GM12878 (cell line): ENCODE measurements at regions of chr1 and their contacts with region 1.

Region 1: GRCh38 chr1:62841587-62842169 is 57.7 kb downstream of the ATG4C start:
- DNase-seq: peak; percentile 15
- ATAC-seq: peak; percentile 85
- H3K4me3 ChIP-seq: no peak overlapping the region
- H3K27ac ChIP-seq: no peak overlapping the region
- H3K4me1 ChIP-seq: no peaks in the 10 kb centered on the region
- H3K27me3 ChIP-seq: no peaks in the 10 kb centered on the region
- CTCF ChIP-seq: peak; percentile 36 to 62 (median 55); a peak in 5 of 6 replicates
- EP300 ChIP-seq: no peak
- POLR2A ChIP-seq: no peak
- RAD21 ChIP-seq: peak; percentile 70

Region 2: DNA sequence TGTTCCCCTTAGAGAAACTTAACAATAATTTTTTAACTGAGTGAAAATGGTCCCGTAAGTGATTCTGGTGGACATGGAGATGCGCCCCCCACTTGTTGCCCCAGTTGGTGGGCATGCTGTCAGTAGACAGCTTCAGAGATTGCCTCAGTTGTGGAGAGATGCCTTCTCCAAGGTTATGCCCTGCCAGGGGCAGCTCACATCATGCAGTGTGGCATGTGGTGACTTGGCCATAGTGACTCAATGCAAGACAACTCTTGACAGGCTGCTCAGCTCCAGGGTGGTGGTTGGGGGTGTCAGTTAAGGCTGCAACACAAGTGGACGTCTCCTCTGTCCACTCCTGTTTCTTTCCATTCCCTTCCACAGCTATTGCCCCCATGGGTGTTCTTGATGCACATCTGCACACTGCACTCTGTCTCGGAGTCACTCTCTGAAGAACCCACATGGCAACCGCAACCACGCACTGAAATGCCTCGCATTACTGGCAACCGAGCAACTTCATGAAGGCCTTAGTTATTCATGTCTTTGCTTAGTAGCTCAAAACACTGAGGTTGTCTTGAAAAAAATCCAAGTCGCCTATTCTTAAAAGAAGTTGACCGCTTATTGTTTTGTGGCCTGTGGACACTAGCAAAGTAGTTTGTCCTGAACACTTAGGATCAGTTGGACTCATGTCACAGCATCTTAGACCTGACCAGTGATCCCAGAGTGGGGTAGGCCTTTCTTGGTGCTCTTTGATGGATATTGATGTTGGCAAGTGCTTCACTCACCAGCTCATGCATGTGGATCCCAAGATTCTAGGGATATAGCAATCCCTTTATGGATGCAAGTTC is 459.6 kb before region 1 on chr1:
- CTCF ChIA-PET with region 1: no interaction called
- POLR2A ChIA-PET with region 1: no interaction called
- RAD21 ChIA-PET with region 1: no interaction called
- SMC1A ChIA-PET with region 1: no interaction called
- in situ Hi-C with region 1: no loop called
- intact Hi-C with region 1: no loop called
- DNase-seq: no peak
- ATAC-seq: no peak
- H3K4me3 ChIP-seq: no peak overlapping the region
- H3K27ac ChIP-seq: no peak overlapping the region
- H3K4me1 ChIP-seq: no peaks in the 10 kb centered on the region
- H3K27me3 ChIP-seq: no peaks in the 10 kb centered on the region; a peak in 1 of 4 replicates
- CTCF ChIP-seq: no peak
- EP300 ChIP-seq: no peak
- POLR2A ChIP-seq: no peak
- RAD21 ChIP-seq: no peak

Region 3: DNA sequence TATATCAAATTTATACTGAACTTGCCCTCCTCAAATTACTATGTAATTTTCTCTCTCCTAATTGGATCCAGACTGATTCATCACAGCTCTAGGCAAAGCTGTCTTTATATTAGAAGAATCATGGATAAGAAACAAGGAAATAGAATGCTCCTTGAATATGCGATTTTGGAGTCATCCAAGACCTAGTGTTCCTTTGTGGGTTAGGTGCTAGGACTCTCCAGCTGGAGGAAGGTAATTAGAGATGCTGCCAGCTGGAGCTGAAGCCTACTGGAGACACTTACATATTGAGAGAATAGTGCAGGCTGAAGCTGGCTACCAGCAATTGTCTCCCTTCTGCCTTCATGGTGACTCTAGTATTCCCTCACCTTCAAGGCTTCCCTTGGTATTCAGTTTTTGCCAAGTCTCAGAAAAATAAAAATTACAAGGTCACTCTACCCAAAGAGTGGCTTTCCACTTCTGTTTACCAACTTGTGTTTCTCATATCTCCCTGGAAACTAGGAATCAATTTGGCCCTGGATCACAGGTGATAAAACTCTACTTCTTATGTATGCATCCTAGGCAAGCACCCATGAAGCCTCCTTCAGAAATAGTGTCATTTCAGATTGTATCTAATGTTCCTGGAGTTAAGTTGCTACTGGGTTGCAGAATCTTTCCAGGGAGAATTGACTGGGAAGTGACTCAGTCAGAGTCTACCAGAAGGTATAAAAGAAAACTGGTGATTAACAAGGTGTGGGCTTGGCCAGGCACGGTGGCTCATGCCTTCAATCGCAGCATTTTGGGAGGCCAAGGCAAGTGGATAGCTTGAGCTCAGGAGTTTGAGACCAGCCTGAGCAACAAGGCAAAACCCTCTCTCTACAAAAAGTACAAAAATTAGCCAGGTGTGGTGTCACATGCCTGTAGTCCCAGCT is 129.1 kb before region 1 on chr1:
- CTCF ChIA-PET with region 1: no interaction called
- POLR2A ChIA-PET with region 1: no interaction called
- RAD21 ChIA-PET with region 1: no interaction called
- SMC1A ChIA-PET with region 1: no interaction called
- in situ Hi-C with region 1: no loop called
- intact Hi-C with region 1: no loop called
- DNase-seq: no peak
- ATAC-seq: no peak
- H3K4me3 ChIP-seq: no peak overlapping the region
- H3K27ac ChIP-seq: no peak overlapping the region
- H3K4me1 ChIP-seq: no peaks in the 10 kb centered on the region
- H3K27me3 ChIP-seq: no peaks in the 10 kb centered on the region
- CTCF ChIP-seq: no peak
- EP300 ChIP-seq: no peak
- POLR2A ChIP-seq: no peak
- RAD21 ChIP-seq: no peak

Region 4: DNA sequence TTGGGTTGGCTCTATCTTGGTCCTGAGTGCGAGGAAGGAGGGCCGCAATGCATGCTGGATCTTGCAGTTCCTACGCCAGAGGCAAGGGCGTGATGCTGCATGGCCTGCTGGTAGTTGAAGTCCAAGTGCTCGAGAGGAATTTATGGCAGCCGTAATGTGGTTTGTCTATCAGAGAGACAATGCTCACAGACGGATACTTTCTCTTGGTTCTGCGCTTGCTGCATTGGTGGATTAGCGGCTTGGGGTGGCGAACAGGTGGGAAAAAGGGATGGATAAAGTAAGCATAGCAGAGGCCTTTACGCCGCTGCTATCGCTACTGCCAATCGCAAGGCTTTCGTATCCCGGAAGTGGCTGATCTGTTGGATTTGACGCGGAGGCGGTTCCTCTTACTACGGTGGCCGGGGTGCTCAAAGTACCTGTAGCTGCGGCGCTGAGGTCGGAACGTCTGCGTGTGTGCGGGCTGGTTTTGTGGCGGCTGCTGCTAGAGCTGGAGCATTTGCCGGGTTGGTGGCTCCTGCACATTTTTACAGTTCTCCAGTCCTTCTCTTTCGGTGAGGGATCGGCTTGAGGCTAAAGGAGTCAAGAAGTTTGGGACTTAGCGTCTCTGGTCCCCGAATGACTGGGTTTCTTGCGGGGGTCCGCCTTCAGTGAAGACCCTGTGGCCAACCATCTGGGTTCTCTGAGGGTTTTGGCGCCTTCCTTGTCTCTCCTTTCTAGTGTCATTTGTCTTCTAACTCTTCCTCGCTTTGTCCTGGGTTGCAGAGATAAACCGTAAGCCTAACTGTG is 57.8 kb before region 1 on chr1 and contains the start of gene ATG4C:
- CTCF ChIA-PET with region 1: interaction called, 13 read pairs
- POLR2A ChIA-PET with region 1: no interaction called
- RAD21 ChIA-PET with region 1: interaction called, 8 read pairs
- SMC1A ChIA-PET with region 1: interaction called, 6 read pairs
- in situ Hi-C with region 1: no loop called
- intact Hi-C with region 1: loop called (anchors 2 kb)
- DNase-seq: peak; percentile 96
- ATAC-seq: peak; percentile 94
- H3K4me3 ChIP-seq: peak within 1 kb of the TSS; percentile 100
- H3K27ac ChIP-seq: peak within 1 kb of the TSS; percentile 94
- H3K4me1 ChIP-seq: no peaks in the 10 kb centered on the region
- H3K27me3 ChIP-seq: no peaks in the 10 kb centered on the region
- CTCF ChIP-seq: no peak
- EP300 ChIP-seq: 0 out of 4 replicates have a peak, but pooled peaks of 1 of the 2 experiments have one; percentile 29
- POLR2A ChIP-seq: peak; percentile 92
- RAD21 ChIP-seq: no peak
- polyA plus RNA-seq, gene ATG4C: 21.3 to 30.9 TPM

Region 5: DNA sequence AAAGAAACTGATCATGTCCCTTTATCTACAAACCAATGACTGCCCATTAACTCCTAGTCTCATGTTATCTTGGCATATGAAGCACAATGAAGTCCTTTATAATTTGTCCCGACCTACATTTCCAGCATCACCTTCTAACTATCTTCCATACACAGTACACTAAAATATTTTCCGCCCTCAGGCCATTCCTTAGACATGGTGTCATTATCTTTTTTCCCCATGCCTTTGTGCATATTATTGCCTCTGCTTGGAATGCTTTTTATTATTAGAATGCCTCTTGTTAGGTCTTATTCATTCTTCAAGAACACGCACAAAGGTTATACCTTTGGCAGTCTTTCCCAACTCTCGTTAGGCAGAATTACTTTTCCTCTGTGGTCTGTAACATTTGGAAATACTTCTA is 18.1 kb before region 1 on chr1:
- CTCF ChIA-PET with region 1: interaction called, 45 read pairs
- POLR2A ChIA-PET with region 1: no interaction called
- RAD21 ChIA-PET with region 1: no interaction called
- SMC1A ChIA-PET with region 1: interaction called, 6 read pairs
- in situ Hi-C with region 1: no loop called
- intact Hi-C with region 1: no loop called
- DNase-seq: no peak
- ATAC-seq: no peak
- H3K4me3 ChIP-seq: no peak overlapping the region
- H3K27ac ChIP-seq: no peak overlapping the region
- H3K4me1 ChIP-seq: no peaks in the 10 kb centered on the region
- H3K27me3 ChIP-seq: no peaks in the 10 kb centered on the region
- CTCF ChIP-seq: no peak
- EP300 ChIP-seq: no peak
- POLR2A ChIP-seq: no peak
- RAD21 ChIP-seq: no peak

Region 6: GRCh38 chr1:62882201-62883104 is 40.8 kb after region 1 on chr1:
- CTCF ChIA-PET with region 1: interaction called, 19 read pairs
- POLR2A ChIA-PET with region 1: no interaction called
- RAD21 ChIA-PET with region 1: no interaction called
- SMC1A ChIA-PET with region 1: no interaction called
- in situ Hi-C with region 1: no loop called
- intact Hi-C with region 1: no loop called
- DNase-seq: no peak
- ATAC-seq: no peak
- H3K4me3 ChIP-seq: no peak overlapping the region
- H3K27ac ChIP-seq: no peak overlapping the region
- H3K4me1 ChIP-seq: no peaks in the 10 kb centered on the region
- H3K27me3 ChIP-seq: no peaks in the 10 kb centered on the region
- CTCF ChIP-seq: no peak
- EP300 ChIP-seq: no peak
- POLR2A ChIP-seq: no peak
- RAD21 ChIP-seq: no peak

Region 7: DNA sequence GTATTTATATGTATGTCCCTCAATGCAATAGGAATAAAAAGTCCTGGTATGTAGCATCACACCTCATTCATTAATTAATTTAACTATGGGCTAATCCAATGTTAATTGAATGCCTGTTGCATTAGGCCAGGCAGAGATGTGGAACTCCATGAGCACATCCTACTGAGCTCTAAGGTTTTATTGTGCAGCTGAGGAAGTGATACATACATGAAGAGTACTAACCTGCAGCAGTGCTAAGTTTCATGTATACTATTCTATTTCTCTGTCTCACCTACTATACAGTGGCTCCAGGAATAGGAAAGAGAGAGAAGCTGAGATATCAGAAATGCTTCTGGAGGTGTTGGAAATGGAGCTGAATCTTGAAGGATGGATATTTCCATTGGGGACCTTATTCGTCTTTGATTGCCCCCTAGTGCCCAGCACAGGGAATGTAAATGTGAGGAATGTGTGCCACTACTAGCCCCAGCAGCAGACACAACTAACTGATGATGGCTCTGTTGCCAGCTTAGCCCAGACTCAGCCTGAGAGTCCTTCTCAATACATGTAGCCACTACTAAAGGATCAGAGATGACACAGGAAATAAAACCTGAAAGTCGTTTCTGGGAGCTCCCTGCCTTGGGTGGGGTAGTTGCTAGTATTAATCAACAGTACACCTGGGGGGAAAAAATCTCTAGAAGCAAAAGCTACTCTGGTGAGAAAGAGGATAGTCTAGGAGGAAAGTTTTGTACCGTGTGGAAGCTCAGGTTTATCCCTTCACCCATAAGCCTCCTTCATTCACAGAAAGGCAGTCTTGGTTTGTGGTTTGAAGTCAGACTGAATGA is 307.4 kb after region 1 on chr1:
- CTCF ChIA-PET with region 1: interaction called, 12 read pairs
- POLR2A ChIA-PET with region 1: no interaction called
- RAD21 ChIA-PET with region 1: interaction called, 10 read pairs
- SMC1A ChIA-PET with region 1: interaction called, 10 read pairs
- in situ Hi-C with region 1: no loop called
- intact Hi-C with region 1: loop called (anchors 2 kb)
- DNase-seq: no peak
- ATAC-seq: peak; percentile 90
- H3K4me3 ChIP-seq: no peak overlapping the region
- H3K27ac ChIP-seq: no peak overlapping the region
- H3K4me1 ChIP-seq: no peaks in the 10 kb centered on the region
- H3K27me3 ChIP-seq: no peaks in the 10 kb centered on the region; a peak in 2 of 4 replicates
- CTCF ChIP-seq: peak; percentile 67 to 74 (median 69)
- EP300 ChIP-seq: no peak
- POLR2A ChIP-seq: no peak
- RAD21 ChIP-seq: peak; percentile 73